ENCODE measurements at regions of chr2 and their contacts with region 1.

Region 1: DNA sequence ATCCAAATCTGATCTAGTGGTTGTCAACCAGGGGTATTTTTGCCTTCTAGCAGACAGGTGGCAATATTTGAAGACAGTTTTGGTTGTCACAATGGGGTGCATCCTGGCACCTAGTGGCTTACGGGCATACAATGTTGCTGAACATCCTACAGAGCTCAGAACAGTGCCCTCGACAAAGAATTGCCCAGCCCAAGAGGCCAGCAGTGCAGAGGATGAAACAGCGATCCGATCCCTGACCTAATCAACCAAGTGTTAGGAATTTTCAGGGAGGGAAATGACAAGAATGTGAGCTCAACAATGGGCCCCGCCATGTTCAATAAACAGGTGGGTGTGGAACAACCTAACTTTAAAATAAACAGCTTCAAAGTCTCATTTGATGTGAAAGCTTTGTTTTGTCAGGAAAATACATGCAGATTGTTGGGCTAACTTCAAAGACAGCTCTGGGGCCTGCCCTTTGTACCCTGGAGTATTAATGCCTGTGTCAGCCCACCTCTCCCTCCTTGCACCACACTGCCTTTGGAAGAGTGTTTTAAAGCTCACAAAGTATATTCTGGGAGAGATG is 22.5 kb upstream of the SCYGR5 start:
- DNase-seq: no peak
- H3K4me3 ChIP-seq: no peak overlapping the region
- H3K27me3 ChIP-seq: peaks cover 3% of the 10 kb centered on the region; the same call in 1 of the 2 replicates
- CTCF ChIP-seq: no peak

Region 2: DNA sequence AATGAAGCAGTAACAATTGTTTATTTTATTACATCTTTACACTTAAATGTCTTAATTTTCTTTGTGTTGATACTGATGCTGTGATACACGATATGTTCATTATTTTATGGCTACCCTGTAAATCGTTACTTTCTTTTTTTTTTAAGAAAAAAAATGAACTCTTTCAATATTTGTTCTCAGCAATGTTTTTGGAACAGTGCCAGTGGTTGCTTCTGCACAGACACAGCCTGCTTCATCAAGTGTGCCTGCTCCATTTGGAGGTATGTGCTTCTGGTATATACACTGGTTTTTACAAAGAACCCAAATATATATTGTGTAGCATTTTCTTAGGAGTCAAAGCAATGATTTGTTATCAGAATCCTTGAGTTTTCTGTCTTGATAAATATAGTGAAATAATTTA is 107.6 kb before region 1 on chr2:
- CTCF ChIA-PET with region 1: interaction called, 10 read pairs
- POLR2A ChIA-PET with region 1: no interaction called
- DNase-seq: no peak
- H3K4me3 ChIP-seq: no peak overlapping the region
- H3K27me3 ChIP-seq: no peaks in the 10 kb centered on the region
- CTCF ChIP-seq: no peak

Region 3: DNA sequence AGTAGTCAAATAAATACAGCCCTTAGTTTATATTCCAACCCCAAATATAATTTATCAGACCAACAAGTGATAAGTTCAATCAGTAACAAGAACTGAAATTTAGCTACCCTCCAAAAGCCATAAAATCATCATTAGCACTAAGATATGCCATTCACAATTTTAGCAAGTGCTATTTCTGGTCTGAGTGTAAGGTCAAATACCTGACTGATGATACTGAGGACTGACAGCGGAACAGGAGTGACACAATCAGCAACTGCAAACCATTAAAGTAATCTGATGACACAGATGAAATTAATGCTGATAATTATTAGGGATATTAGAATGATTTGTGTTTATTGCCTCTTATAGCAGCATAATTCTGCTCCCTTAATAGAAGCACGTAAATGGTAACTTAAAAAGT is 690.1 kb after region 1 on chr2:
- CTCF ChIA-PET with region 1: no interaction called
- POLR2A ChIA-PET with region 1: no interaction called
- DNase-seq: no peak
- H3K4me3 ChIP-seq: no peak overlapping the region
- H3K27me3 ChIP-seq: no peaks in the 10 kb centered on the region
- CTCF ChIP-seq: no peak

Measured in BJ (cell line).